Common myeloid progenitor, CD34-positive (primary cell): ENCODE measurements at regions of chr1 and their contacts with region 1.

Region 1: GRCh38 chr1:84753516-84754385 is 63.5 kb upstream of the SSX2IP start:
- DNase-seq: peak; percentile 75 to 84 (median 84)
- H3K4me3 ChIP-seq: no peak overlapping the region
- H3K27ac ChIP-seq: no peak overlapping the region
- H3K4me1 ChIP-seq: peaks cover 0 to 2% (median under 1%) of the 10 kb centered on the region in 4 experiments
- H3K27me3 ChIP-seq: no peaks in the 10 kb centered on the region

Region 2: DNA sequence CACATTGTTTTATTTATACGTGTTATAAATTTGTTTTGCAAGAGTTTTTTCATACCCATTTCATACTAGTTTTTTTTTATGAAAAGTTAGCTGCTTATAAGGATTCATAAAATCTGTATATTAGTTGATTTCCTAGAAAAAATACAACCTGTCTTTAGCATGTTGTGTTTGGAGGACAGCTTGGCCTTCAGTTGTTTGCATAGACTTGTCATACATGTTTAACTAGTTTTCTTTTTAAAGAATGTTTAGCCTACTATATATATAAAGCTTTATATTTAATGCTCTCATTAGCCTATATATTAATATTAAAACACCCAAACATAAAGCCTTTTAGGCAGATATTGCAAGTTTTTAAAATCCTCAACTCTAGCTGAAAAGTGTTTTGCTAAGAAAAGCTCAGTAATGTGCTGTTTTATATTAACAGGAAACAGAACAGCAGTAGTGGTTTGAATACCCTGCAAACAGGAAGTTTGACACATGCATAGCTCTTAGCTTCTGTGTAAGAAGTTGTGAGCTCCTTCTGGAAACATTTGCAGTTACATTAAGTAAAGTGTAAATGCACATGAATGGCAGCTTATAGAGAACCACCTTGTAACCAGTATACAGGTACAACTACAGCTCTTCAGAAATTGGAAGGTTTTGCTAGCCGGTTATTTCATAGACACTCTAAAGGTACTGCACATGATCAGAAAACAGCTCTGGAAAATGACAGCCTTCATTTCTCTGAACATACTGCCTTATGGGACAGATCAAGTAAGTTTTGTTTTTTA is 609.8 kb before region 1 on chr1 and contains the start of gene PRKACB:
- CTCF ChIA-PET with region 1: interaction called, 13 read pairs
- POLR2A ChIA-PET with region 1: no interaction called
- DNase-seq: peak; percentile 78 to 93 (median 86)
- H3K4me3 ChIP-seq: peak within 1 kb of the TSS in 6 of 7 experiments; percentile 64 to 99 (median 80)
- H3K27ac ChIP-seq: peak within 1 kb of the TSS; percentile 97
- H3K4me1 ChIP-seq: peaks cover 12 to 51% (median 42%) of the 10 kb centered on the region in 4 experiments
- H3K27me3 ChIP-seq: no peaks in the 10 kb centered on the region

Region 3: GRCh38 chr1:84632673-84633434 is 120.9 kb before region 1 on chr1:
- CTCF ChIA-PET with region 1: no interaction called
- POLR2A ChIA-PET with region 1: no interaction called
- DNase-seq: peak in 2 of 3 donors; percentile 34 to 40
- H3K4me3 ChIP-seq: no peak overlapping the region
- H3K27ac ChIP-seq: no peak overlapping the region
- H3K4me1 ChIP-seq: no peaks in the 10 kb centered on the region
- H3K27me3 ChIP-seq: no peaks in the 10 kb centered on the region

Region 4: GRCh38 chr1:84668185-84668584 is 85.6 kb before region 1 on chr1:
- CTCF ChIA-PET with region 1: interaction called, 49 read pairs
- POLR2A ChIA-PET with region 1: no interaction called
- DNase-seq: peak; percentile 31 to 55 (median 42)
- H3K4me3 ChIP-seq: no peak overlapping the region
- H3K27ac ChIP-seq: no peak overlapping the region
- H3K4me1 ChIP-seq: peaks cover 0 to 3% (median 0%) of the 10 kb centered on the region in 4 experiments
- H3K27me3 ChIP-seq: no peaks in the 10 kb centered on the region

Region 5: DNA sequence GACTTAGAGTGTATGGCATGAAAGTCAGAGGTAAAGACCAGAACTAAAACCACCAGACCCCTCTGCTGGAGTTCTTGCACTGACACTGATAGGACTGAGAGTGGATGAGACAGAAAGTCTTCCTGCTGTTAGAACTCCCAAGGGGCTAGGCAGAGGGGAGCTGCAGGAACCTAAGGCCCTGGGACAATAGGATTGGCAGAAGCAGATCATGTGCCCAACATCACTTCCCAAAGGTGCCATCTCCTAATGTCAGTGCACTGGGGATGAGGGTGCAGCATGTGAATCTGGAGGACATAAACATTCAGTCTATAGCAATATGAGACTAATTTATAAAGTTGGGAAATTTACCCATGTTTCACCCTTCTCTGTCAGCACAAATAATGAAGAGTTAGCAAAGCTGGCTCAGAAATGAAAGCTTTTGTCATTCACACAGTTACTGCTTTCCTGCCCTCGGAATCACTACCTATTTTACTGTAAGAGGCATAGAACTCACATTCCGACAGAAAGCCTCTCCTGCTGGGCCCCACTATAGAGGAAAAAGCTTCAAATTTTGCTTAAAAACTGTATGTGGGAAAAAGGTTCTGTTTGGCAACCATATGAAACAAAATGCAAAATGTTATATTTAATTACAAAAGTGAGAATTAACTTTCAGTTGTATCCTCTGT is 13.6 kb before region 1 on chr1:
- CTCF ChIA-PET with region 1: interaction called, 10 read pairs
- POLR2A ChIA-PET with region 1: no interaction called
- DNase-seq: no peak
- H3K4me3 ChIP-seq: no peak overlapping the region
- H3K27ac ChIP-seq: no peak overlapping the region
- H3K4me1 ChIP-seq: no peaks in the 10 kb centered on the region
- H3K27me3 ChIP-seq: no peaks in the 10 kb centered on the region

Region 6: GRCh38 chr1:84772428-84772943 is 18.7 kb after region 1 on chr1:
- CTCF ChIA-PET with region 1: interaction called, 37 read pairs
- POLR2A ChIA-PET with region 1: no interaction called
- DNase-seq: peak; percentile 79 to 87 (median 80)
- H3K4me3 ChIP-seq: no peak overlapping the region
- H3K27ac ChIP-seq: no peak overlapping the region
- H3K4me1 ChIP-seq: no peaks in the 10 kb centered on the region
- H3K27me3 ChIP-seq: no peaks in the 10 kb centered on the region